Activated naive CD4-positive, alpha-beta T cell treated with anti-CD3 and anti-CD28 coated beads for 36 hours (primary cell): ENCODE measurements at regions of chr5 and their contacts with region 1.

Region 1: DNA sequence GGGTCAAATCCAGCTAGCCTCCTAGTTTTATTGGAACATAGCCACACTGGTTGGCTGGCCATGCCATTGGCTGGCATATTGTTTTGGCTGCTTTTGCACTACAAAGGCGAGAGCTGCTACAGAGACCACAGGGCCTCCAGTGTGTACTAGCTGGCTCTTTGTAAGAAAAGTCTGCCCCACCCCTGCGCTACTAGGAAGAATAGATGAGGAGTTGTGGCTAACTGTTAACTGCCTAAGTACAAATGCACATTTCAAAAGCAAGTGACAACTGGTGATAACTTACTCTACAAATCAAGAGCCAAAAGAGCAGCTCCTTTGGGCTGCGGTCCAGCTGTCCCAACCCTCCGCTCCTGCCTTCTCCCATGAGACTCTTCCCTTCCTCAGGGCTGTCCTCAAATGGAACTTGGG is 63.9 kb downstream of the SERINC5 start:
- DNase-seq: peak; percentile 59
- H3K4me3 Mint-ChIP-seq: peak overlapping the region; percentile 69
- H3K27ac Mint-ChIP-seq: peak overlapping the region; percentile 97
- H3K4me1 Mint-ChIP-seq: peaks cover 80% of the 10 kb centered on the region
- H3K27me3 Mint-ChIP-seq: no peaks in the 10 kb centered on the region

Region 2: DNA sequence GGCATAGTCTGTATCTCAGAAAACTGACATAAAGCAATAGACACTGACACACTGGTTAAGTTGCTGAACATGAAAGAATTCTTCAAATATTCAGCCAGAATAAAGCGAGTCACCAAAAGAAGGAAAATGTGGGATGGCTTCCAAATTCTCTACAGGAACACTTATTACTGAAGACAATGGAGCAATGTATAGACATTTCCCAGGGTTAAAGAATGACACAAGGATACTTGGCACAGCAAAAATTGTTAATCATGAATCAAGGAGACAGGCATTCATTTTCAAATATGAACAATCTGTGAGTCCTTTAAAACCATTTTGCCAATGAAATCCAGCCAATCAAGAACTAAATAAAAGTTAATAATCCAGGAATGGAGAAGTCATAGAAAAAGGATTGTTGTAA is 293.4 kb before region 1 on chr5:
- CTCF ChIA-PET with region 1: no interaction called
- intact Hi-C with region 1: no loop called
- DNase-seq: no peak
- H3K4me3 Mint-ChIP-seq: no peak overlapping the region
- H3K27ac Mint-ChIP-seq: no peak overlapping the region
- H3K4me1 Mint-ChIP-seq: no peaks in the 10 kb centered on the region
- H3K27me3 Mint-ChIP-seq: peaks cover 34% of the 10 kb centered on the region

Region 3: DNA sequence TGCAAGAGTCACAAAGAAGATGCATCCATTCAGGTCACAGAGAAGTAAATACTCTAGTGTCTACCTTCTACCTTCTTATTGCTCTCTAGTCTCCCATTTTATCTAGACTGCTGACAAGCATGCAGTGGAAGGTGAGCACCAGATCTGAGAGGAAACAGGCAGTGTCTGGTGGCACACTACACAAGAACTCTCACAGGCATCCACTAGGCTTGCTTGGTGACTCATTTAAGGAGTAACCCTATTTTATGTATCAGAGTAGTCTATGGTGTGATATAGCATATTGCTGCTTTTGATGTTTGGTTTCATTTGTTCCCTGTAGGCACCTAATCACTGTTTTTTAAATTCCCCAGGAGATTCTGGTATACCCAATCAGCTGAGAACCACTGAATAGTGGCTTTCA is 158.5 kb before region 1 on chr5:
- CTCF ChIA-PET with region 1: no interaction called
- intact Hi-C with region 1: no loop called
- DNase-seq: peak; percentile 64
- H3K4me3 Mint-ChIP-seq: no peak overlapping the region
- H3K27ac Mint-ChIP-seq: no peak overlapping the region
- H3K4me1 Mint-ChIP-seq: peaks cover 37% of the 10 kb centered on the region
- H3K27me3 Mint-ChIP-seq: peaks cover 40% of the 10 kb centered on the region

Region 4: DNA sequence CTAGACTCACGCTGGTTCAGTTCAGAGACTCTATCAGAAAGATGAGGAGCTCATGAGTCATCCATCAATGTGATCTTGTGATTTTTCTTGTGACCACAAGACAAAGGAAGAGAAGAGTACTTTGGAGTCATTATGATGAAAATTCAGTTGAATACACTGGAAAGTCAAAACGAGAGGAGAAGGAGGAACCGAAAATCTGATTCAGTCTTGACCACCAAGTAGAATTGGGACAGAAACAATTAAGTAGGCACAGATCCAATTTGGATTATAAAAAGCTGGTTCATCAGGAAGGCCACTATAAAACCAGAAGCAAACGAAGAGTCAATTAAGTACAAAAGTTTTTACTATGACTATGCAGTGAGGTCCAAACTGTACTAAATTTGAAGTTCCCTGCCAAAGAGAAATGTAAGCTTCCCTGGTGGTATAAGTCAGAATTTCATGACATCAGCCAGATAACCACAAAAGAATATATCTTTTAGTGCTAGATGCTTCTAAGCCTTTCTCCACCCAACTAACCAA is 66.0 kb before region 1 on chr5:
- CTCF ChIA-PET with region 1: interaction called, 3 read pairs
- intact Hi-C with region 1: loop called (anchors 2 kb)
- DNase-seq: peak; percentile 44
- H3K4me3 Mint-ChIP-seq: no peak overlapping the region
- H3K27ac Mint-ChIP-seq: peak overlapping the region; percentile 43
- H3K4me1 Mint-ChIP-seq: peaks cover 47% of the 10 kb centered on the region
- H3K27me3 Mint-ChIP-seq: no peaks in the 10 kb centered on the region

Region 5: DNA sequence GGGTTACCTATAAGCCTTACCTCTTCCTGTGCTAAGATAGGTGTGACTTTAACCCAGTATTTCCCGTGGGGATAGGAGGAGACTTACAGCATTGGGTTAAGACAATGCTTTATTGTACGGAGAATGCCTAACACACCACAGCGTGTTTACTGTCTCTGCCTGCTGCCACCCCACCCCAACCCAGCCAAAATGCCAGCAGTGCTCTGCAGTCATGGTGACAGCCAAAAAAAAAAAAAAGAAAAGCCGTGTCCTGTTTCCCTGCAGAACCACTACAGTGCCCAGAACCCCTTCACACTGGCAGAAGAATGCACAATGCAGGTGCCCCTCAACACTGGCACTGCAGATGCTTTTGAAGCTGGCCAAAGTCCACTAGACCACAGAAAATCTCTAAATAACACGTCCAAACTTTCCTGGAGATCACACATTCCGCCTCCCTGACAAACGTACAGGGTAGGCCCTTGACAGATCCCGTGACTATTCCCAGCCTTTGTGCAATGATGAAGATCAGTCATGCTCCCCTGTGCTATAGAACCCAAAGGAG is 38.3 kb before region 1 on chr5:
- CTCF ChIA-PET with region 1: interaction called, 3 read pairs
- intact Hi-C with region 1: loop called (anchors 2 kb)
- DNase-seq: no peak
- H3K4me3 Mint-ChIP-seq: no peak overlapping the region
- H3K27ac Mint-ChIP-seq: peak overlapping the region; percentile 86
- H3K4me1 Mint-ChIP-seq: peaks cover 53% of the 10 kb centered on the region
- H3K27me3 Mint-ChIP-seq: no peaks in the 10 kb centered on the region

Region 6: GRCh38 chr5:80204808-80205614 is 13.0 kb after region 1 on chr5:
- CTCF ChIA-PET with region 1: interaction called, 72 read pairs
- intact Hi-C with region 1: loop called (anchors 1 kb)
- DNase-seq: peak; percentile 46
- H3K4me3 Mint-ChIP-seq: no peak overlapping the region
- H3K27ac Mint-ChIP-seq: peak overlapping the region; percentile 88
- H3K4me1 Mint-ChIP-seq: peaks cover 82% of the 10 kb centered on the region
- H3K27me3 Mint-ChIP-seq: no peaks in the 10 kb centered on the region

Region 7: GRCh38 chr5:80216753-80217596 is 25.0 kb after region 1 on chr5:
- CTCF ChIA-PET with region 1: interaction called, 8 read pairs
- intact Hi-C with region 1: loop called (anchors 1 kb)
- DNase-seq: peak; percentile 66
- H3K4me3 Mint-ChIP-seq: peak overlapping the region; percentile 79
- H3K27ac Mint-ChIP-seq: peak overlapping the region; percentile 90
- H3K4me1 Mint-ChIP-seq: peaks cover 87% of the 10 kb centered on the region
- H3K27me3 Mint-ChIP-seq: no peaks in the 10 kb centered on the region